GM12878 (cell line): ENCODE measurements at regions of chr22 and their contacts with region 1.

Region 1: GRCh38 chr22:46592390-46592872 is 27.8 kb upstream of the GRAMD4 start:
- DNase-seq: no peak
- ATAC-seq: peak; percentile 71
- H3K4me3 ChIP-seq: peak overlapping the region; percentile 29; the same call in 1 of the 2 replicates
- H3K27ac ChIP-seq: peak overlapping the region; percentile 94
- H3K4me1 ChIP-seq: peaks cover 46% of the 10 kb centered on the region
- H3K27me3 ChIP-seq: no peaks in the 10 kb centered on the region
- CTCF ChIP-seq: no peak
- EP300 ChIP-seq: peak; percentile 15 to 66; a peak in 1 of 4 replicates
- POLR2A ChIP-seq: no peak
- RAD21 ChIP-seq: no peak

Region 2: DNA sequence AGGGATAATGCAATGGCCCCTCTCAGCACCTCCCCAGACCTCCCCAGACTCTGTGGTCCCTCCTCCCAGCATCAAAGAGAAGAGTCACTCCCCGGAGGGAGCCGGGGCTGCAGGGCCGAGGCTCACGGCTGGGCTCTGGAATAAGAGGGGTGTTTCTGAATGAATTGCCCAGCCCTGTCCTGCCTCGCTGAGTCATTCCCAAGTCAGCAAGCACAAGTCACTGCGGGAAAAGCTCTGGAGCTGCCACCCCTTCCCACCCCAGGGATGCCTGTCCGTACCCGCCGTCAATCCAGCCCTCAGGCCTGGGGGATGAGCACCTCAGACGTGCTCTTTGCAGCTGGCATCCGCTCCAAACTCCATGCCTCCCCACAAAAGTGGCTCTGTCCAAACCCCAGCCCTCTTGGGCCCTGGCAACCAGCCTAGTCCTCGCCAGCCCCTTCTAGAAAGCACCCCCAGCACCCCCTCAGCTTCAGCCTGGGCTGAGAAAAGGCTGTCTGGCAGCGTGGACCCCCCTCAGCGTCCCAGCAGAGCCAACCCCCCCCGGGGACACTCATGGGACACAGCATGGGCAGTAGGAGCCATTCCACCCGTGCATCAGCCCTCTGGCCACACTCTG is 77.7 kb before region 1 on chr22:
- CTCF ChIA-PET with region 1: no interaction called
- POLR2A ChIA-PET with region 1: no interaction called
- RAD21 ChIA-PET with region 1: no interaction called
- SMC1A ChIA-PET with region 1: no interaction called
- in situ Hi-C with region 1: no loop called
- intact Hi-C with region 1: no loop called
- DNase-seq: no peak
- ATAC-seq: no peak; the same call in 2 of the 3 replicates
- H3K4me3 ChIP-seq: no peak overlapping the region
- H3K27ac ChIP-seq: no peak overlapping the region
- H3K4me1 ChIP-seq: no peaks in the 10 kb centered on the region
- H3K27me3 ChIP-seq: no peaks in the 10 kb centered on the region
- CTCF ChIP-seq: no peak
- EP300 ChIP-seq: no peak
- POLR2A ChIP-seq: no peak
- RAD21 ChIP-seq: no peak

Region 3: GRCh38 chr22:46604306-46604690 is 11.9 kb after region 1 on chr22:
- CTCF ChIA-PET with region 1: interaction called, 3 read pairs
- POLR2A ChIA-PET with region 1: interaction called, 6 read pairs
- RAD21 ChIA-PET with region 1: no interaction called
- SMC1A ChIA-PET with region 1: interaction called, 4 read pairs
- in situ Hi-C with region 1: no loop called
- intact Hi-C with region 1: loop called (anchors 2 kb)
- DNase-seq: peak; percentile 59
- ATAC-seq: peak; percentile 97
- H3K4me3 ChIP-seq: peak overlapping the region; percentile 15; the same call in 1 of the 2 replicates
- H3K27ac ChIP-seq: no peak overlapping the region
- H3K4me1 ChIP-seq: peaks cover 8% of the 10 kb centered on the region
- H3K27me3 ChIP-seq: no peaks in the 10 kb centered on the region
- CTCF ChIP-seq: no peak
- EP300 ChIP-seq: peak; percentile 80 to 82; a peak in 3 of 4 replicates
- POLR2A ChIP-seq: no peak
- RAD21 ChIP-seq: no peak

Region 4: GRCh38 chr22:46613606-46614021 is 21.2 kb after region 1 on chr22:
- CTCF ChIA-PET with region 1: interaction called, 3 read pairs
- POLR2A ChIA-PET with region 1: interaction called, 7 read pairs
- RAD21 ChIA-PET with region 1: interaction called, 5 read pairs
- SMC1A ChIA-PET with region 1: interaction called, 4 read pairs
- in situ Hi-C with region 1: no loop called
- intact Hi-C with region 1: loop called (anchors 1 kb)
- DNase-seq: peak; percentile 28
- ATAC-seq: peak; percentile 69
- H3K4me3 ChIP-seq: peak overlapping the region; percentile 60
- H3K27ac ChIP-seq: peak overlapping the region; percentile 83
- H3K4me1 ChIP-seq: peaks cover 19% of the 10 kb centered on the region
- H3K27me3 ChIP-seq: no peaks in the 10 kb centered on the region
- CTCF ChIP-seq: no peak
- EP300 ChIP-seq: 0 out of 4 replicates have a peak, but pooled peaks of 1 of the 2 experiments have one; percentile 10
- POLR2A ChIP-seq: 0 out of 2 replicates have a peak, but pooled peaks have one; percentile 45
- RAD21 ChIP-seq: no peak

Region 5: GRCh38 chr22:46737976-46738646 is 145.7 kb after region 1 on chr22 and contains the start of gene CERK:
- CTCF ChIA-PET with region 1: interaction called, 4 read pairs
- POLR2A ChIA-PET with region 1: no interaction called
- RAD21 ChIA-PET with region 1: no interaction called
- SMC1A ChIA-PET with region 1: interaction called, 3 read pairs
- in situ Hi-C with region 1: no loop called
- intact Hi-C with region 1: loop called (anchors 5 kb)
- DNase-seq: no peak
- ATAC-seq: peak; percentile 61
- H3K4me3 ChIP-seq: peak within 1 kb of the TSS; percentile 96
- H3K27ac ChIP-seq: peak within 1 kb of the TSS; percentile 63
- H3K4me1 ChIP-seq: peaks cover 30% of the 10 kb centered on the region
- H3K27me3 ChIP-seq: no peaks in the 10 kb centered on the region
- CTCF ChIP-seq: no peak
- EP300 ChIP-seq: no peak
- POLR2A ChIP-seq: peak; percentile 56; the same call in 1 of the 2 replicates
- RAD21 ChIP-seq: no peak
- polyA plus RNA-seq, gene CERK: 4.0 to 5.8 TPM

Region 6: DNA sequence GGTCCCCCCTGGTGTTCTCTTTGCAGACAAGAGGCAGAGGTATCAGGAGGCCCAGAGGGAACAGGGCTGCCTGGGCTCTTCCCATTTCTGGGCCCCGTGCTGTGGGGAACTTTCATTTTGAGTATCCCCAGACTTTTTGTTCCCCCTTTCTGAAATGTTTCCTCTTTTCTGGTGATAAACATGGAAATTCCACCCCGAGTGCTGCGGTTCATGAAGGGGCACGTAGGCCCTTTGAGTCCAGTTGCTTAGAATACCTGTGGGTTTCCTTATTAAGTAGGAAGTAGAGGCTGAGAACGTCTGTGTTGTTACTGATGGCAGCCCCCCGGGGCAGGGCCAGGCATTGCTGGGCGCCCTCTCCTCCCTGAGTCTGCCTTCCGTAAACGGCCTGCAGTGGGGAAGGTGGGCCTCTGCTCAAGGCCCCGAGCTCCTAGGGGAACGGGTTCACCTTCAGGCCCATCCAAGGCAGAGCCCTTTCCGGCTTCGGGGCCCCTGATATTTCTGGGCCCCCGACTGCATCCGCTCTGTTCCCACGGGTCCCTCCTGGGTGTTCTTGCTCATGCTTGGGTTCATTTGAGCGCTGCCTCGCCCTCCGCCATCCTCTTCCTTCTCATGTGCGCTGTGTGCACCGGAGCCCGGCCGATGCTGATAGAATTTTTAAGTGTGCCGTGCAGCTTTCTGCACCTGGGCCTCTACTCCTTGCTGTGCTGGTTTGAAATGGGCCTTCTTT is 182.0 kb after region 1 on chr22:
- CTCF ChIA-PET with region 1: no interaction called
- POLR2A ChIA-PET with region 1: no interaction called
- RAD21 ChIA-PET with region 1: interaction called, 3 read pairs
- SMC1A ChIA-PET with region 1: interaction called, 4 read pairs
- in situ Hi-C with region 1: no loop called
- intact Hi-C with region 1: loop called (anchors 10 kb)
- DNase-seq: no peak
- ATAC-seq: peak; percentile 62
- H3K4me3 ChIP-seq: peak overlapping the region; percentile 73
- H3K27ac ChIP-seq: peak overlapping the region; percentile 94
- H3K4me1 ChIP-seq: peaks cover 63% of the 10 kb centered on the region
- H3K27me3 ChIP-seq: no peaks in the 10 kb centered on the region
- CTCF ChIP-seq: no peak; a peak in 1 of 6 replicates
- EP300 ChIP-seq: peak in 1 of 2 experiments; percentile 69; a peak in 1 of 4 replicates
- POLR2A ChIP-seq: no peak; the same call in none of the 2 replicates
- RAD21 ChIP-seq: no peak